Upper lobe of right lung (tissue), 1 donor: ENCODE measurements at regions of chr12 and their contacts with region 1.

Region 1: DNA sequence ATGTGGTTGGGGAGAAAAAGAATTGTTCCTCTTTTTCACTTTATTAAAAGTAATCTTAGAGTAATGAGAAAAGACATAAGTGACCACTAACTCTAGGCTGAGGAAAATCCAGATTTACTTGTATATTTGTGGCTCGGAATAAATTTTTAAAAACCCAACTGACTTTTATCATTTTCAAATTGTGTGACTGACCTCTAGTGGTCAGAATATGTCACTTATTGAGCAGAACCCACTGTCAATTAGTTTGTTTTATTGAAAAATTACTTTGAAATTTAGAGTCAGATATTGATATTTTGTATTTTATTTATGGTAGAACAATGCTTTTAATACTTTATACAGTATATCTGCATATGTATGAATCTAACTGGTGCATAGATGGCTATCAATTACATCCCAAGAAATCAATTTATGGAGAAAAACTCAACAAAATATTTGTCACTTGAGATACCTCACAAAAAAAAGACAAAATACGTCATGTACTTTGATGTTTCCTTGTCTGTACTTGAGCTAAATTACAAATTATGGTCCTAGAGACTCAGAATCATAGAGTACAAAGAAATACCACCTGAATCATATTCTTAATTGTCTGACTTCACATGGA is 229.4 kb downstream of the CNTN1 start:
- DNase-seq: no peak
- ATAC-seq: no peak
- H3K4me3 ChIP-seq: no peak overlapping the region
- H3K27ac ChIP-seq: no peak overlapping the region
- H3K4me1 ChIP-seq: no peaks in the 10 kb centered on the region
- H3K27me3 ChIP-seq: no peaks in the 10 kb centered on the region
- CTCF ChIP-seq: peak; percentile 66

Region 2: DNA sequence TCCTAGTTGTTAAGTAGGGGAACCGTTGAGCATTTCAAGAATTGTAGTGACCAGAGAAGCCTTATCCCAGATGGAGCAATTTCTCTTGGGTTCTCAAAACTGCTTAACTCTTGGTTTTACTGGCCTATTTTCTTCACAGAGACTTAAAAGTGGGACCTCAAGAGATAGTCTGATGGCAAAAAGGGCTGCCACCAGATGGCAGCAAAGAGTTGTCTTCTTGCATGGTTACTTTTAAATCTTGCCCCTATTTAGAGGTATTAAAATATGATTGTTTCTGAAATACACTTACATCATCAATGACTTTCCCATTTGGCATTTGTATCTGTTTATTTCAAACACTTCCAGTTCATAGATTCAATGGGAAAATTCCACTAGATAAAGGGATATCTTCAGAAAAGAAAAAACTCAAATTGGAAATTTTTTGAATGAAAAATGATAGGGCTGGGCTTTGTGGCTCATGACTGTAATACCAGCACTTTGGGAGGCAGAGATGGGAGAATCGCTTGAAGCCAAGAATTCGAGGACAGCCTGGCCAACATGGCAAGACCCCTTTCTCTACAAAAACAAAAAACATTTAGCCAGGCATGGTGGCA is 299.3 kb before region 1 on chr12:
- intact Hi-C with region 1: loop called (anchors 5 kb)
- DNase-seq: no peak
- ATAC-seq: peak; percentile 60
- H3K4me3 ChIP-seq: no peak overlapping the region
- H3K27ac ChIP-seq: no peak overlapping the region
- H3K4me1 ChIP-seq: no peaks in the 10 kb centered on the region
- H3K27me3 ChIP-seq: no peaks in the 10 kb centered on the region
- CTCF ChIP-seq: peak; percentile 76

Region 3: GRCh38 chr12:41011939-41012338 is 90.3 kb after region 1 on chr12:
- intact Hi-C with region 1: no loop called
- DNase-seq: no peak
- ATAC-seq: no peak
- H3K4me3 ChIP-seq: no peak overlapping the region
- H3K27ac ChIP-seq: no peak overlapping the region
- H3K4me1 ChIP-seq: no peaks in the 10 kb centered on the region
- H3K27me3 ChIP-seq: no peaks in the 10 kb centered on the region
- CTCF ChIP-seq: no peak

Region 4: GRCh38 chr12:41034686-41035085 is 113.0 kb after region 1 on chr12:
- intact Hi-C with region 1: no loop called
- DNase-seq: no peak
- ATAC-seq: no peak
- H3K4me3 ChIP-seq: no peak overlapping the region
- H3K27ac ChIP-seq: no peak overlapping the region
- H3K4me1 ChIP-seq: no peaks in the 10 kb centered on the region
- H3K27me3 ChIP-seq: no peaks in the 10 kb centered on the region
- CTCF ChIP-seq: no peak